ENCODE measurements at regions of chr6 and their contacts with region 1.

Region 1: DNA sequence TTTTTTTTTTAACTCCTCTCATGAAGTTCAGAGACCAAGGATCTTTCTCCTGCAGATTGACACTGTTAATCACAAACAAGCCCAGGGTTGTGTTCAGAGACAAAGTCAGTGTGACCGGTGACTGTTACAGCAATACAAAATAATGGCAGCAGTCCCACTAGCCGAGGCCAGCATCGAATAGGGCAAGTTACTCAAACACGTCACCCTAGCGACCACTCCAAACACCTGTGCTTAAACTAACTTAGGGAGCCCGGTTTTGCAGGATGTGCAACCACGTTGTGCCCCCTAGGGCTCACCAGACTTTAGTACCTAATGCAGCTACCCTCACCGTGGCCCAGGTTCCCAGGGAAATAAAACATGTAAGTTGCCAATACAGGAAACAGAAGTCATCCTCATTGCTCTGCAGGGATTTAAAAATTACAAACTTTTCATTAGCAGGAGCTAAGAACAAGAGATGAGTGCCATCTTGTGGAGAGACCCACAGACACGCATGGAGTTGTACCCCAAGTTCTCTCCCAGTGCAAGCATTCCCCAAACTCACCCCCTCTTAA is 38.1 kb downstream of the FAM50B start:
- DNase-seq: peak; percentile 57
- ATAC-seq: peak; percentile 79
- H3K4me3 ChIP-seq: no peak overlapping the region
- H3K27ac ChIP-seq: peak overlapping the region; percentile 7
- H3K4me1 ChIP-seq: peaks cover 78% of the 10 kb centered on the region
- H3K27me3 ChIP-seq: no peaks in the 10 kb centered on the region
- CTCF ChIP-seq: peak; percentile 79
- EP300 ChIP-seq: no peak
- POLR2A ChIP-seq: no peak
- RAD21 ChIP-seq: no peak; the same call in 1 of the 2 replicates

Region 2: DNA sequence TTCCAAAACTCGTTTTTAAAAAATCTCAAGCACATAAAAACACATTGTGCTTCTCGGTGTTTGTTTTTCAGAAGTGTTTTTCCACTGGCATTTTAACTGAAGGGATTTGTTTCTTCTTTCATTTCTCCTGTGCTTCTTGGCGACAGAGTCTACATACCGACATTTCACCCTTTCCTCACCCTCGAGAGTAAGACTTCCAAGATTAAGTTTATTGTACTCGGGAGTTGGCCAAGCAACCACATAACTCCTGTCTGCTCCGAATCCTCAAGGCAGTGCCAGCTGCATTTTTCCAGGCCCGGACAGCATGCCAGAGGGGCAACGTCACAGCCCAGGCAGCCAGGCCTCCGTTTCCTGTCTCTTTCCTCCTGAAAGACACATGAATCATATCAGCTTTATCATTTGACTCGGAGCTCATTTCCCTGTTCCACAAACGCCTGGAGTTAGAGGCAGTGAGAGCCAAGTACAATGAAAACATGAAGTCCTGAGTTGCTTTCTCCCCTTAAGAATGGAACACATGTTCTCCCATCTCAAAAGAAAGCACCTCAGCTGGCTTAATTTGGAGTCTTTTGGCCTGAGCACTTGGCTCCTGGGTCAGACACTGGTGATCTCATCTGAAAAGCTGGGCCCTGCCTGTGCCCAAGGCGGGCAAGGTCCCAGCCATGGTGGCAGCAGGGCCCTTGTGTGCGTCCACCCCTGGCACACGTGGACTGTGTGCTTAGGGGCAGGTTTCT is 61.2 kb before region 1 on chr6:
- CTCF ChIA-PET with region 1: no interaction called
- POLR2A ChIA-PET with region 1: no interaction called
- in situ Hi-C with region 1: no loop called
- intact Hi-C with region 1: loop called (anchors 1 kb)
- DNase-seq: peak; percentile 73
- ATAC-seq: peak; percentile 78
- H3K4me3 ChIP-seq: peak overlapping the region; percentile 24 to 43 (median 31); a peak in 5 of 6 replicates
- H3K27ac ChIP-seq: peak overlapping the region; percentile 48
- H3K4me1 ChIP-seq: peaks cover 49% of the 10 kb centered on the region
- H3K27me3 ChIP-seq: no peaks in the 10 kb centered on the region
- CTCF ChIP-seq: no peak
- EP300 ChIP-seq: no peak
- POLR2A ChIP-seq: no peak
- RAD21 ChIP-seq: no peak

Region 3: GRCh38 chr6:3905945-3906845 is 19.0 kb after region 1 on chr6:
- CTCF ChIA-PET with region 1: interaction called, 3 read pairs
- POLR2A ChIA-PET with region 1: interaction called, 9 read pairs
- in situ Hi-C with region 1: no loop called
- intact Hi-C with region 1: loop called (anchors 1 kb)
- DNase-seq: peak; percentile 94
- ATAC-seq: peak; percentile 93
- H3K4me3 ChIP-seq: peak overlapping the region in 1 of 3 experiments; percentile 39; a peak in 1 of 6 replicates
- H3K27ac ChIP-seq: peak overlapping the region; percentile 86
- H3K4me1 ChIP-seq: peaks cover 68% of the 10 kb centered on the region
- H3K27me3 ChIP-seq: no peaks in the 10 kb centered on the region
- CTCF ChIP-seq: no peak
- EP300 ChIP-seq: peak; percentile 77 to 91
- POLR2A ChIP-seq: peak; percentile 55 to 57; a peak in 2 of 4 replicates
- RAD21 ChIP-seq: peak; percentile 62

Region 4: GRCh38 chr6:3977875-3978711 is 90.9 kb after region 1 on chr6:
- CTCF ChIA-PET with region 1: interaction called, 6 read pairs
- POLR2A ChIA-PET with region 1: no interaction called
- in situ Hi-C with region 1: no loop called
- intact Hi-C with region 1: loop called (anchors 2 kb)
- DNase-seq: peak; percentile 51
- ATAC-seq: peak; percentile 96
- H3K4me3 ChIP-seq: no peak overlapping the region
- H3K27ac ChIP-seq: no peak overlapping the region
- H3K4me1 ChIP-seq: 0 out of 2 replicates have a peak, but pooled peaks cover 5% of the 10 kb centered on the region
- H3K27me3 ChIP-seq: peaks cover 0 to 2% of the 10 kb centered on the region in 2 experiments; a peak in 2 of 5 replicates
- CTCF ChIP-seq: peak; percentile 82
- EP300 ChIP-seq: no peak
- POLR2A ChIP-seq: no peak
- RAD21 ChIP-seq: peak; percentile 75

Region 5: DNA sequence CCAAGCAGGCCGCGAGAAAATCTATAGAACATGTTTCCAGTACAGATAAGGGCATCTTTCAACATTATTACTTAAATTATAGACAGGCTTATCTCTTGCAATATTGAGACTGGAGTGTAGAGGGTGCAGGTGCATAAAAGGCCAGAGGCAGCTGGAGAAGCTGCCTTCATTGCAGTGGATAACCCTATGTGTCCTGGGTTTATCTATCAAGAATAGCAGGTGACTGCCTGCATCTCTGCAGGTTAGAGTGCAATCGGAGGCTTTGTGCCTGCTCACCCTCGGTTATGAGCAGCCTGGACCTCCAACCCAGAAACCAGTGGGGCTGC is 276.9 kb after region 1 on chr6:
- CTCF ChIA-PET with region 1: no interaction called
- POLR2A ChIA-PET with region 1: no interaction called
- in situ Hi-C with region 1: no loop called
- intact Hi-C with region 1: no loop called
- DNase-seq: no peak
- ATAC-seq: peak; percentile 75
- H3K4me3 ChIP-seq: no peak overlapping the region
- H3K27ac ChIP-seq: no peak overlapping the region
- H3K4me1 ChIP-seq: peaks cover 27% of the 10 kb centered on the region
- H3K27me3 ChIP-seq: peaks cover 0 to 27% of the 10 kb centered on the region in 2 experiments; a peak in 3 of 5 replicates
- CTCF ChIP-seq: 0 out of 2 replicates have a peak, but pooled peaks have one; percentile 26
- EP300 ChIP-seq: no peak
- POLR2A ChIP-seq: no peak
- RAD21 ChIP-seq: no peak